ENCODE measurements at regions of chr7 and their contacts with region 1.

Region 1: DNA sequence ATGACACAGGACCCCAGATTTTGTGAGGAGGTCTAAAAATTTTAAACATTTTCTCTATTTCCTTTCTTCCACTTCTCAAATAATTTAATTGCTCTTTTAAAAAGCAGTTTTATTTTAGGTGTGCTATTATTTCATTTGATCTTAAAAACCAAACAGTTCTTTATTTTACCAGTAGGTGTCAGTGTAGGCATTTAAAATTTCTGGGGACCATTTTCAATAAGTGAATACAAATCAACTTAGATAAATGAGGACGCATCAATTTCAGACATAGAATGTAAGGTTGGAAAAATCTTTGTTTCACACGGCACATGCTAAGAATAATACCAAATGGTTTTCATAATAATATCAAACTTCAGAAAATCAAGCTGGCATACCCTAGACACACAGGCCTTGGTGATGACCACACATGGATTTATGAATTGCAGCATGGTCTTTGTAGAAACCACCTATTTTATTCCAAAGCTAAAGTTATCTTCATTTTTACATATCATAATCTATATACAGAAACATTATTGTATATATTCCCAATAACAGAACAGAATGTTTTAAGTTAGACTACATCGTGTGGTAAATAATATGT is 127.6 kb upstream of the SLC26A5 start:
- DNase-seq: no peak
- H3K4me3 ChIP-seq: no peak overlapping the region
- H3K27ac ChIP-seq: no peak overlapping the region
- H3K27me3 ChIP-seq: no peaks in the 10 kb centered on the region
- CTCF ChIP-seq: peak; percentile 53

Region 2: DNA sequence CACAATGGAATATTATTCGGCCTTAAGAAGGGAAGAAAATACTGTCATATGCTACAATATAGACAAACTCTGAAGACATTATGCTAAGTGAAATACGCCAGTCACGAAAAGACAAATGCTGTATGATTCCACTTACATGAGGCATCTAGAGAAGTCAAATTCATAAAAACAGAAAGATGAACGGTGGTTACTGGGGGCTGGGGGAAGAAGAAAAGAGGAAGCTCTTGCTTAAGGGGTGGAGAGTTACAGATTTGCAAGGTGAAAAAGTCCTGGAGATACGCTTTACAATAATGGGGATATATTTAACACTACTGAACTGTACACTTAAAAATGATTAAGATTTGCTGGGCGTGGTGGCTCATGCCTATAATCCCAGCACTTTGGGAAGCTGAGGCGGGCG is 177.1 kb before region 1 on chr7:
- CTCF ChIA-PET with region 1: no interaction called
- POLR2A ChIA-PET with region 1: no interaction called
- DNase-seq: no peak
- H3K4me3 ChIP-seq: no peak overlapping the region
- H3K27ac ChIP-seq: no peak overlapping the region
- H3K27me3 ChIP-seq: no peaks in the 10 kb centered on the region
- CTCF ChIP-seq: no peak

Region 3: GRCh38 chr7:103524042-103524907 is 49.3 kb before region 1 on chr7:
- CTCF ChIA-PET with region 1: interaction called, 17 read pairs
- POLR2A ChIA-PET with region 1: no interaction called
- DNase-seq: peak; percentile 29
- H3K4me3 ChIP-seq: no peak overlapping the region
- H3K27ac ChIP-seq: no peak overlapping the region
- H3K27me3 ChIP-seq: no peaks in the 10 kb centered on the region
- CTCF ChIP-seq: peak; percentile 66

Region 4: GRCh38 chr7:103593691-103594090 is 20.1 kb after region 1 on chr7:
- CTCF ChIA-PET with region 1: interaction called, 11 read pairs
- POLR2A ChIA-PET with region 1: no interaction called
- DNase-seq: no peak
- H3K4me3 ChIP-seq: no peak overlapping the region
- H3K27ac ChIP-seq: no peak overlapping the region
- H3K27me3 ChIP-seq: no peaks in the 10 kb centered on the region
- CTCF ChIP-seq: no peak

Region 5: DNA sequence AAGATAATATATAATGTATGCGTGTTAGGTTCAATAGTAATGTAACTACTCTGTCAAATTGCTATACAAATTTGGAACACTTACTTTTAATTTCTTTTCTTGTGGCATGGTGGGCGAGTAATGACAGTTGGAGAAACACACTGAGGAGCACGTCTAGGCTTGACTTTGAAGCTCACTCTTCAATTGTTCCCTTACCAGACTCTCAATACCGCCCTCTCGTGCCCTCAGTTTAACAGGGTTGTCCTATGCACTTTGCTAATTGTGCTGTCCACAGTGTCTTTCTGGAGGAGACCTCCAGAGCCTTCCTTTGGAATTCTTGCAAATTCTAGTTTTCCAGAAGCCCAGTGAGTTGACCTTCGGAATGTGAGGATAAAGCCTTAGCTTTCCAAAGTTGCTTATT is 523.1 kb after region 1 on chr7:
- CTCF ChIA-PET with region 1: interaction called, 10 read pairs
- POLR2A ChIA-PET with region 1: no interaction called
- DNase-seq: no peak
- H3K4me3 ChIP-seq: no peak overlapping the region
- H3K27ac ChIP-seq: no peak overlapping the region
- H3K27me3 ChIP-seq: no peaks in the 10 kb centered on the region
- CTCF ChIP-seq: peak; percentile 39; the same call in 1 of the 2 replicates

Region 6: DNA sequence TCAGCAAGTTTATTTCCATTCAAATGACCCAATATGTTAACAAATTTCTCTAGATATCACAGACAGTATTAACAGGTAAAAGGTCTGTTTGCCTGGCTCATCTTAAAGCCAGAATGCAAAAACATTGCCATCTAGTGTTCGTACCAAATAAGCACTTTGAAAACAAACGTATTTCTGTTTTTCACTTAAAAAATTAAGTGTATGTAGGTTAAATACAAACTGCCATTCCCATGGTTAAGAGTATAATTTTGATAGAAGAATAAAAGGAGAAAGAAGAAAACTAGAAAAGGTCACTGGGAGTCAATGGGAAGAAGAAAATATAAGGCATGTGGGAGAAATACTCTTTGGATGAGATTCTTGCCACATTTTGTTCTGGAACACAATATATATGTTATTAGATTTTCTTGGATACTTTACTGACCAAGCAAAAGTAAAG is 583.3 kb after region 1 on chr7:
- CTCF ChIA-PET with region 1: interaction called, 30 read pairs
- POLR2A ChIA-PET with region 1: no interaction called
- DNase-seq: no peak
- H3K4me3 ChIP-seq: no peak overlapping the region
- H3K27ac ChIP-seq: no peak overlapping the region
- H3K27me3 ChIP-seq: no peaks in the 10 kb centered on the region
- CTCF ChIP-seq: peak; percentile 76

Measured in AG04450 (cell line).